AG04450 (cell line): ENCODE measurements at regions of chr10 and their contacts with region 1.

Region 1: GRCh38 chr10:106387063-106387462 is 777.4 kb downstream of the SORCS1 start:
- DNase-seq: no peak
- H3K4me3 ChIP-seq: no peak overlapping the region
- H3K27ac ChIP-seq: no peak overlapping the region
- H3K27me3 ChIP-seq: no peaks in the 10 kb centered on the region
- CTCF ChIP-seq: no peak

Region 2: DNA sequence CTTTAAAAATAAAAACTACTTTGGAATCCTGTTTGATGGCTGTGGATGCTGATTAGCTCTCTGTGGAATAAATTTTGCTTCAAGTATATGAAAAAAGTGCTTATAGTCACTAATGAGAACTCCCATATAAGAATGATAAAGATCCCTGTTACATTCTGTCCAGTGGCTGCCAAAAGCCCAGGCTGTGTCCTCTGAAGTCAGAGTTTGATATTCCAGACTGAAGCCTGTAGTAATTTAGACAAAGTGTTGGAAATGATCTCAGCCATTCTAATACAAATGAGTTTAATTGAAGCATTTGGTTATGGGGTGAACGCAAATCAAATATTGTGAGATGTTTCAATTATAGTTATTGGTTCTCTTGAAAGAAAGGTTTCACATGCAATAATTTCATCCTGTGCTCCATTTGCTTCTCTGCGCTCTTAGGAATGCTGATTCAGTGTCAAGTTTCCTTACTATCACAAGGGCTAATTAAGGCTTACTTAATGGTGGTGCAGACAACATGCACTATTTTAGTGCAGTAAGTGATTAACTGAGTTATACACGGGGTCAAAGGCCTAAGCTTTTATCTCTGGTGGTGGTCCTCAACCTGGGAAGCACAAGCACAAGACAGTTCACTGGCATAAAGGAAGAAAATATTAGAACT is 90.2 kb before region 1 on chr10:
- CTCF ChIA-PET with region 1: no interaction called
- POLR2A ChIA-PET with region 1: no interaction called
- DNase-seq: no peak
- H3K4me3 ChIP-seq: no peak overlapping the region
- H3K27ac ChIP-seq: no peak overlapping the region
- H3K27me3 ChIP-seq: no peaks in the 10 kb centered on the region
- CTCF ChIP-seq: no peak

Region 3: GRCh38 chr10:106338486-106338885 is 48.6 kb before region 1 on chr10:
- CTCF ChIA-PET with region 1: interaction called, 12 read pairs
- POLR2A ChIA-PET with region 1: interaction called, 10 read pairs
- DNase-seq: no peak
- H3K4me3 ChIP-seq: no peak overlapping the region
- H3K27ac ChIP-seq: no peak overlapping the region
- H3K27me3 ChIP-seq: no peaks in the 10 kb centered on the region
- CTCF ChIP-seq: no peak